Thyroid gland (tissue), 4 donors: ENCODE measurements at regions of chr19 and their contacts with region 1.

Region 1: GRCh38 chr19:58212336-58213074 is 16.2 kb upstream of the ZNF544 start:
- DNase-seq: no peak
- H3K4me3 ChIP-seq: no peak overlapping the region
- H3K27ac ChIP-seq: no peak overlapping the region
- H3K4me1 ChIP-seq: no peaks in the 10 kb centered on the region
- H3K27me3 ChIP-seq: no peaks in the 10 kb centered on the region
- CTCF ChIP-seq: no peak
- POLR2A ChIP-seq: no peak

Region 2: DNA sequence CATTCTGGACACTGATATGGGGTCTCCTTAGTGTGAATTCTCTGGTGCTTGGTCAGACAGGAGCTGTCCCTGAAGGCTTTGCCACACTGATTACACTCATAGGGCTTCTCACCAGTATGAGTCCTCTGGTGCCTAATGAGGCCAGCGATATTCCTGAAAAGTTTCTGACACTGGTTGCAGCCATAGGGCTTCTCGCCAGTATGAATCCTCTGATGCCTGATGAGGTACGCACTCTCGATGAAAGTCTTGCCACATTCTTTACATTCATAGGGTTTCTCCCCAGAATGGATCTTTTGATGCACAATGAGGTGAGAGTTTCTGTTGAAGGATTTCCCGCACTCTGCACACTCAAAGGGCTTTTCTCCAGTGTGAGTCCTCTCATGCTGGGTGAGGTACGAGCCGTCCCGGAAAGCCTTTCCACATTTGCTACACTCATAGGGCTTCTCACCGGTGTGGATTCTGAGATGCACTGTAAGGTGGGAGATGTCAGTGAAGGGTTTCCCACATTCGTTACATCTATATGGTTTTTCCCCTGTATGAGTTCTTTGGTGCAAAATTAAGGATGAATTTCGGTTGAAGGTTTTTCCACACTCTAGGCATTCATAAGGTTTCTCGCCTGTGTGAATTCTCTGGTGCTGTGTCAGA is 84.3 kb before region 1 on chr19:
- intact Hi-C with region 1: loop called (anchors 5 kb)
- DNase-seq: no peak
- H3K4me3 ChIP-seq: no peak overlapping the region
- H3K27ac ChIP-seq: no peak overlapping the region
- H3K4me1 ChIP-seq: no peaks in the 10 kb centered on the region
- H3K27me3 ChIP-seq: no peaks in the 10 kb centered on the region
- CTCF ChIP-seq: no peak
- POLR2A ChIP-seq: no peak

Region 3: DNA sequence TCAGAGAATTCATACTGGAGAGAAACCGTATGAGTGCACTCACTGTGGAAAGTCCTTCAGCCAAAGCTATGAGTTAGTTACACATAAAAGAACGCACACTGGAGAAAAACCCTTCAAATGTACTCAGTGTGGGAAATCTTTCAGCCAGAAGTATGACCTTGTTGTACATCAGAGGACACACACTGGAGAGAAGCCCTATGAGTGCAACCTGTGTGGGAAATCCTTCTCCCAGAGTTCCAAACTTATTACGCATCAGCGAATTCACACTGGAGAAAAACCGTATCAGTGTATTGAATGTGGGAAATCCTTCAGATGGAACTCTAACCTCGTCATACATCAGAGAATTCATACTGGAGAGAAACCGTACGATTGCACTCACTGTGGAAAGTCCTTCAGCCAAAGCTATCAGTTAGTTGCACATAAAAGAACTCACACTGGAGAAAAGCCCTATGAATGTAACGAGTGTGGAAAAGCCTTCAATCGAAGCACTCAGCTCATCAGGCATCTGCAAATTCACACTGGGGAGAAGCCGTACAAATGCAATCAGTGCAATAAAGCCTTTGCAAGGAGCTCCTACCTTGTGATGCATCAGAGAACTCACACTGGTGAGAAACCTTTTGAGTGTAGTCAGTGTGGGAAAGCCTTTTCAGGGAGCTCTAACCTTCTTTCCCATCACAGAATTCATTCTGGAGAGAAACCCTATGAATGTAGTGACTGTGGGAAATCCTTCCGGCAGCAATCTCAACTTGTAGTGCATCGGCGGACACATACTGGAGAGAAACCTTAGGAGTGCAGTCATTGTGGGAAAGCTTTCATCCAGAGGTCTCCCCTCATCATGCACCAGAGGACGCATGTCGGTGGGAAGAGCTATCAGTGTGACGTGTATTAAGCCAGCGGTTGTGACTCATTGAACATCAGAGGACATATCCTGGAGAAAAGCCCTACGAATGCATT is 49.7 kb after region 1 on chr19:
- intact Hi-C with region 1: loop called (anchors 5 kb)
- DNase-seq: no peak
- H3K4me3 ChIP-seq: no peak overlapping the region
- H3K27ac ChIP-seq: no peak overlapping the region
- H3K4me1 ChIP-seq: no peaks in the 10 kb centered on the region
- H3K27me3 ChIP-seq: no peaks in the 10 kb centered on the region
- CTCF ChIP-seq: no peak
- POLR2A ChIP-seq: no peak

Region 4: GRCh38 chr19:58338825-58339558 is 126.5 kb after region 1 on chr19:
- intact Hi-C with region 1: no loop called
- DNase-seq: no peak
- H3K4me3 ChIP-seq: no peak overlapping the region
- H3K27ac ChIP-seq: no peak overlapping the region
- H3K4me1 ChIP-seq: peaks cover 0 to 3% of the 10 kb centered on the region in 2 donors
- H3K27me3 ChIP-seq: no peaks in the 10 kb centered on the region
- CTCF ChIP-seq: no peak
- POLR2A ChIP-seq: no peak